ENCODE measurements at regions of chr6 and their contacts with region 1.

Region 1: GRCh38 chr6:63188828-63189227 is 22.4 kb upstream of the FKBP1C start:
- DNase-seq: no peak
- H3K4me3 ChIP-seq: no peak overlapping the region
- H3K27ac ChIP-seq: no peak overlapping the region
- H3K4me1 ChIP-seq: no peaks in the 10 kb centered on the region
- H3K27me3 ChIP-seq: no peaks in the 10 kb centered on the region
- CTCF ChIP-seq: no peak
- POLR2A ChIP-seq: no peak

Region 2: DNA sequence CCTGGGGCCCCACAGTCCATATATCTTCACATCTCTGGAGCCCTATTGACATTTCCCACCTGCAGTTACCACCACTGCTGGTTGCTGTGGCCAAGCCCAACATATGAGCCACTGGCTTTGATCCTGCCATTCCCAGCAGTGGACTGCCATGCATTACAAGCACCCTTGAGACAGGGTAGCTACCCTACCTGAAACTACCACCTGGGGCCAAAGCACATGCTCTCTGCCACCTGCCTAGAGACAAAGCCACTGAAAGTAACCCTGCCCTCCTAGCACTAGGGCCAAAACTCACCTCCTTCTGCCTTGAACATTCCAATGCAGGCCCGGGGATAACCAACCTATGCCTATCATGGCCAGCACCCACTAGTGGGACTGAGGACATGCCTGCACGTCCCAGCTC is 647.3 kb before region 1 on chr6:
- CTCF ChIA-PET with region 1: no interaction called
- POLR2A ChIA-PET with region 1: no interaction called
- dilution Hi-C with region 1: no loop called
- intact Hi-C with region 1: no loop called
- DNase-seq: no peak
- H3K4me3 ChIP-seq: no peak overlapping the region
- H3K27ac ChIP-seq: no peak overlapping the region
- H3K4me1 ChIP-seq: no peaks in the 10 kb centered on the region
- H3K27me3 ChIP-seq: no peaks in the 10 kb centered on the region
- CTCF ChIP-seq: no peak
- POLR2A ChIP-seq: no peak

Region 3: GRCh38 chr6:63224179-63224578 is 35.4 kb after region 1 on chr6:
- CTCF ChIA-PET with region 1: no interaction called
- POLR2A ChIA-PET with region 1: no interaction called
- dilution Hi-C with region 1: no loop called
- intact Hi-C with region 1: loop called (anchors 1 kb)
- DNase-seq: no peak
- H3K4me3 ChIP-seq: no peak overlapping the region
- H3K27ac ChIP-seq: no peak overlapping the region
- H3K4me1 ChIP-seq: no peaks in the 10 kb centered on the region
- H3K27me3 ChIP-seq: no peaks in the 10 kb centered on the region
- CTCF ChIP-seq: no peak
- POLR2A ChIP-seq: no peak

Region 4: DNA sequence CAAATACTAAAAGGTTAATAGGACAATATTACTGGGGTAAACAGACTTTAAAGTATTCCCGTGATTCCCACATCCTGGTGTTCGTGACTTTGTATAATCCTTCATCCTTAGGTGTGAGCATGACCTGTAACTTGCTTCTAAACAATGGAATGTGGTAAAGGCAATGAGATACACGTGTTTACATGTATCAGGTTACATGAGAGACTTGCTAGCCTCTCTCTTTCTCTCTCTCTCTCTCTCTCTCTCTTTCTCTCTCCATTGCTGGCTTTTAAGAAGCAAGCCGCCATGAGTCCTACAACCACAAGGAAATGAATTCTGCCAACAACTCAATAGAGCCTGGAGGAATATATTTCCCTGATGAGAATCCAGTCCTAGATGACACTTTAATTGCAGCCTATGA is 214.9 kb after region 1 on chr6:
- CTCF ChIA-PET with region 1: no interaction called
- POLR2A ChIA-PET with region 1: no interaction called
- dilution Hi-C with region 1: no loop called
- intact Hi-C with region 1: no loop called
- DNase-seq: no peak
- H3K4me3 ChIP-seq: no peak overlapping the region
- H3K27ac ChIP-seq: no peak overlapping the region
- H3K4me1 ChIP-seq: no peaks in the 10 kb centered on the region
- H3K27me3 ChIP-seq: no peaks in the 10 kb centered on the region
- CTCF ChIP-seq: no peak
- POLR2A ChIP-seq: no peak

Measured in endothelial cell of umbilical vein (primary cell).